MCF 10A (cell line): ENCODE measurements at regions of chr12 and their contacts with region 1.

Region 1: GRCh38 chr12:67827820-67828383 is 161.3 kb upstream of the IFNG-AS1 start:
- DNase-seq: peak; percentile 93
- H3K4me3 Mint-ChIP-seq: peak overlapping the region; percentile 65
- H3K27ac Mint-ChIP-seq: peak overlapping the region; percentile 85
- H3K4me1 Mint-ChIP-seq: peaks cover 13% of the 10 kb centered on the region
- H3K27me3 Mint-ChIP-seq: no peaks in the 10 kb centered on the region
- CTCF ChIP-seq: no peak

Region 2: DNA sequence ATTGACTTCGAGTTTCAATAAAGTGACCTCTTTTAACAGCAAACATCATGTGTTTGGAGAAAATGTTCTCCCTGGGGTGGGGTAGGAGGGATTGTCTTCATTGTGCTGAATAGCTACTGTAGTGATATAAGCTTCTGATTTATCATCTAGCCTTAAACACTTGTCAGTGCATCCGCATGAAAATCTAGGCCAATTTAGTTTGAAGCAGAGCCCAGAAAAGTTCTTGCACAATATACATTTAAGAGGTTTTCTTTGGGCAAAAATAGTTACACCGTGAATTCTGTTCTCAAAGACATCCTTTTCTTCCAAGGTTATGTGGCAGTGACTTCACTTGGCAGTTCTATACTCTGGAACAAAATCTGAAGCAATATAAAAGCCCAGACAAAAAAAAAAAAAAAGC is 25.3 kb after region 1 on chr12:
- CTCF ChIA-PET with region 1: interaction called, 4 read pairs
- POLR2A ChIA-PET with region 1: interaction called, 4 read pairs
- intact Hi-C with region 1: loop called (anchors 2 kb)
- DNase-seq: peak; percentile 3
- H3K4me3 Mint-ChIP-seq: no peak overlapping the region
- H3K27ac Mint-ChIP-seq: no peak overlapping the region
- H3K4me1 Mint-ChIP-seq: peaks cover 8% of the 10 kb centered on the region
- H3K27me3 Mint-ChIP-seq: no peaks in the 10 kb centered on the region
- CTCF ChIP-seq: no peak